WTC11 (cell line): ENCODE measurements at regions of chr12 and their contacts with region 1.

Region 1: GRCh38 chr12:131104463-131105350 is 151.0 kb downstream of the ADGRD1 start:
- DNase-seq: peak; percentile 94
- ATAC-seq: peak; percentile 96
- H3K4me3 Mint-ChIP-seq: no peak overlapping the region
- H3K27ac Mint-ChIP-seq: no peak overlapping the region
- H3K4me1 Mint-ChIP-seq: no peaks in the 10 kb centered on the region
- H3K27me3 Mint-ChIP-seq: no peaks in the 10 kb centered on the region; the same call in 1 of the 2 replicates
- CTCF ChIP-seq: peak; percentile 87

Region 2: GRCh38 chr12:130916251-130916911 is 188.3 kb before region 1 on chr12:
- CTCF ChIA-PET with region 1: interaction called, 27 read pairs
- POLR2A ChIA-PET with region 1: no interaction called
- DNase-seq: peak; percentile 69
- ATAC-seq: peak; percentile 87
- H3K4me3 Mint-ChIP-seq: peak overlapping the region; percentile 13; the same call in 1 of the 2 replicates
- H3K27ac Mint-ChIP-seq: no peak overlapping the region
- H3K4me1 Mint-ChIP-seq: peaks cover 8% of the 10 kb centered on the region
- H3K27me3 Mint-ChIP-seq: peaks cover 9% of the 10 kb centered on the region
- CTCF ChIP-seq: peak; percentile 92

Region 3: DNA sequence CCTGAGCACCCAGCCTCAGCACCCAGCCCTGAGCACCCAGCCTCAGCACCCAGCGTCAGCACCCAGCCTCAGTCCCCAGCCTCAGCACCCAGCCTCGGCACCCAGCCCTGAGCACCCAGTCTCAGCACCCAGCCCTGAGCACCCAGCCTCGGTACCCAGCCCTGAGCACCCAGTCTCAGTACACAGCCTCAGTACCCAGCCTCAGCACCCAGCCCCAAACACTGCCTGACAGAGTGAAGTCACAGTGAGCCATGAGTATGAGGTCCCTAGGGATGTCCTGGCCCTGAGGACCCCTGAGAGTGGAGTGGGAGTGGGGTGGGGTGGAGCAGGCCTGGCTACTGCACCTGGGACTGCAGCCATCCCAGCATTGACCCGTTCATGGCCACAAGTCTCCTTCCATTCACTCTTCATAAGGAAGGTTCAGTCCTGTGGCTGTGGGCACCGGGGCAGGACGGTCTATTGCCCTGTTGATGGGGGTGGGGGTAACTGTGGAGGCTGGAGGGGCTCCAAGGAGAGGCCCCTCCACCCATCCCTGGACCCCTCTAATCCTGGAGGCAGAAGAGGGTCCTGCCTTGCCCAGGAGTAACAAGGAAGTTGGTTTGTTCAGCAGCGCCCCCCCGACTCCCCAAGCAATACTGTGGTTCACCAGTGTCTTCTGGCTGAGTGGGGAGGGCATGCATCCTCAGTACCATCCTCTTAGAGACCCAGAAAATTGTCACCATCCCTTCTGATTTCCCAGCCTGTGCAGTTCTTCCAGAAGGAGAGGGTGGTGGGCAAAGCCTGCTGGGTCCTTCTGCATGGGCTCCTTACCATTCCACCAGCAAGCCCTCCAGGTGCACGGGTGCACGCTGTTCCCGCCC is 10.5 kb before region 1 on chr12:
- CTCF ChIA-PET with region 1: interaction called, 14 read pairs
- POLR2A ChIA-PET with region 1: no interaction called
- DNase-seq: peak; percentile 5
- ATAC-seq: no peak
- H3K4me3 Mint-ChIP-seq: no peak overlapping the region
- H3K27ac Mint-ChIP-seq: no peak overlapping the region
- H3K4me1 Mint-ChIP-seq: no peaks in the 10 kb centered on the region
- H3K27me3 Mint-ChIP-seq: no peaks in the 10 kb centered on the region
- CTCF ChIP-seq: no peak

Region 4: DNA sequence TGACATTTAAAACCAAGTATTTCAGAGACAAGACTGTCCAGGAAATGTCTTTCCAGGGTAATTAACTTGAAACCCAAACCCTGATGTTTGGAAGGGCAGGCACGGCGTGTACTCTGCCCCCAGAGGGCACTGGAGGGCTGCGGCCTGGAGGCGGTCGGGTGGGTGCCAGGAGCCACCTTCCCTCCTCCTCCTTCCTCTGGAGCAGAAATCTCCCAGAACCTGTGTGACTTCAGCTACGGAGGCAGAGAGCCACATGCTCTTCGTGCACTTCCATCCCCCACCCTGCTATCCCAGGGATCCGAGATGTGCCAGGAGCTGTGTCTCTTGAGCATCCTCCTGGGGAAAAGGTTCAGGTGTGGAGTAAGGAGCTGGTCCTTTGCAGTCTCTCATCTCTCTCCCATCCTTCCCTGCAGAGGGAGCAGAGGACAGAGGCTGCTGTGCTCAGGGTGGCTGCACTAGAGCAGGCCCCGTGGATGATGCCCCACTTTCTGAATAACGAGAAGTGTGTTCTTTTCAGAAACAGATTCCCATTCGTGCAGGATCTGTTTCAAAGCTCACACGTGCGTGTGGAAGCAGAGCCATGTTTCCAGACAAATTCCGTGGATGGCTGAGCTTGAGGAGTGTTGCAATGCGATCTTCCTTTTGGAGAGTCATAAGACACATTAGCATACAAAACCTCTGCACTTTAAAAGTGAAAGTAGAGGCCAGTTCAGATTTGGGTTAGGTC is 11.8 kb after region 1 on chr12:
- CTCF ChIA-PET with region 1: interaction called, 98 read pairs
- POLR2A ChIA-PET with region 1: no interaction called
- DNase-seq: peak; percentile 64
- ATAC-seq: peak; percentile 85
- H3K4me3 Mint-ChIP-seq: no peak overlapping the region
- H3K27ac Mint-ChIP-seq: no peak overlapping the region
- H3K4me1 Mint-ChIP-seq: peaks cover 13% of the 10 kb centered on the region
- H3K27me3 Mint-ChIP-seq: 0 out of 2 replicates have a peak, but pooled peaks cover 4% of the 10 kb centered on the region
- CTCF ChIP-seq: no peak

Region 5: DNA sequence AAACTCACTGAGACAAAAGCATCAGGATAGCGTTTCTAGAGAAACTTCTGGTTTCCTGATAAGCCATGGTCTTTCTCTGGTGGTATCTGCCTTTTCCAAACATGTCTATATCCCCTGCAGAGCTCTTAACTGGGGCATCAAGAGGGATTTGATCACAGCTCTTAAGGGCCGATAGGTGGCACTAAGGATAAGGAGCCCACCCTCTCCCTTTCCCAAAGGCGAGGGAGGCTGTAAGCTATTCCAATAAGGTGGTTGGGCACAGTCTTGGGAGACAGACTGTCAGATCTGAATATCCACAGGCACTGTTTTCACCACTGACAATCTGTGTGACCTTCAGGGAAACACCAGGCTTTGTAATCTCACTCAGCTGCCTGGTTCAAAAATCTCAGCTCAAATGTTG is 55.0 kb after region 1 on chr12:
- CTCF ChIA-PET with region 1: interaction called, 22 read pairs
- POLR2A ChIA-PET with region 1: no interaction called
- DNase-seq: no peak
- ATAC-seq: peak; percentile 94
- H3K4me3 Mint-ChIP-seq: no peak overlapping the region
- H3K27ac Mint-ChIP-seq: no peak overlapping the region
- H3K4me1 Mint-ChIP-seq: 0 out of 2 replicates have a peak, but pooled peaks cover 3% of the 10 kb centered on the region
- H3K27me3 Mint-ChIP-seq: no peaks in the 10 kb centered on the region
- CTCF ChIP-seq: 0 out of 2 replicates have a peak, but pooled peaks have one; percentile 24

Region 6: GRCh38 chr12:131223791-131224225 is 119.1 kb after region 1 on chr12:
- CTCF ChIA-PET with region 1: interaction called, 10 read pairs
- POLR2A ChIA-PET with region 1: no interaction called
- DNase-seq: no peak
- ATAC-seq: no peak
- H3K4me3 Mint-ChIP-seq: no peak overlapping the region
- H3K27ac Mint-ChIP-seq: peak overlapping the region; percentile 68
- H3K4me1 Mint-ChIP-seq: peaks cover 16% of the 10 kb centered on the region
- H3K27me3 Mint-ChIP-seq: no peaks in the 10 kb centered on the region
- CTCF ChIP-seq: no peak

Region 7: DNA sequence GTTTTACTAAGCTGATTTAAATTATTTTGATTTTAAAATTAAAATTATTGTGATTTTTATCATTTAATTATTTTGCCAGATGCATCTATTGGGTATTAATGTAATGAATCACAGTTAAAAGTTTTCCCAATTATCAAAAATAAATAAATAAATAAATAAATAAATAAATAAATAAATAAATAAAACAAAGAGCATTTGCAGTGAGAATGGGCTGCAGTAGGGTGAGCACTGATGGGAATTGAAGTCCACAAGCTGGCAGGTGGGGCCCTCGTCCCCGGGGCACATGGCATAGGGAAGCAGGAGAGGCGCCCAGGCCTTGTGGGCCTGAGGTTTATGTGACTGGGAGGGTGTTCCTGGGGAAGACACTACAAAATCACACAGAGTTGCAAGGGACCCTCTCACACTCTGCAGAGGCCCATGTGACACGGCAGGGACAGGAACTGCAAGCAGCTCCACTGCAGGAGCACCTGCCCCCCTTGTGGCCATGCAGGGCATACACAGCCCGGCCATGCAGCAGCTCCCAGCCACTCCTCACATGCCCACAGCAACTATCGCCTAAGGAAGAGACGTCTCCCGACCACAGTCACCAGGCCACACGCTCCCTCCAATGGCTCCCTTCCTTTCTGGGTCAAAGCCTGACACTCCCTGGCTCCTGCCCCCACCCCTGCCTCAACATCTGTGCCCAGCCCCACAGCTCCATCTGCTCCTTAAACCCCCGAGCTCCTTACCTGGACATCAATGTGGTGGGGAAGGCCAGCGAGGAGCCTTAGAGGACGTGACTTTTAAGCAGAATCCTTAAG is 349.9 kb after region 1 on chr12:
- CTCF ChIA-PET with region 1: interaction called, 17 read pairs
- POLR2A ChIA-PET with region 1: no interaction called
- DNase-seq: peak; percentile 82
- ATAC-seq: peak; percentile 89
- H3K4me3 Mint-ChIP-seq: no peak overlapping the region
- H3K27ac Mint-ChIP-seq: no peak overlapping the region
- H3K4me1 Mint-ChIP-seq: peaks cover 15% of the 10 kb centered on the region; the same call in 1 of the 2 replicates
- H3K27me3 Mint-ChIP-seq: no peaks in the 10 kb centered on the region
- CTCF ChIP-seq: peak; percentile 85